ENCODE measurements at regions of chr14 and their contacts with region 1.

Region 1: DNA sequence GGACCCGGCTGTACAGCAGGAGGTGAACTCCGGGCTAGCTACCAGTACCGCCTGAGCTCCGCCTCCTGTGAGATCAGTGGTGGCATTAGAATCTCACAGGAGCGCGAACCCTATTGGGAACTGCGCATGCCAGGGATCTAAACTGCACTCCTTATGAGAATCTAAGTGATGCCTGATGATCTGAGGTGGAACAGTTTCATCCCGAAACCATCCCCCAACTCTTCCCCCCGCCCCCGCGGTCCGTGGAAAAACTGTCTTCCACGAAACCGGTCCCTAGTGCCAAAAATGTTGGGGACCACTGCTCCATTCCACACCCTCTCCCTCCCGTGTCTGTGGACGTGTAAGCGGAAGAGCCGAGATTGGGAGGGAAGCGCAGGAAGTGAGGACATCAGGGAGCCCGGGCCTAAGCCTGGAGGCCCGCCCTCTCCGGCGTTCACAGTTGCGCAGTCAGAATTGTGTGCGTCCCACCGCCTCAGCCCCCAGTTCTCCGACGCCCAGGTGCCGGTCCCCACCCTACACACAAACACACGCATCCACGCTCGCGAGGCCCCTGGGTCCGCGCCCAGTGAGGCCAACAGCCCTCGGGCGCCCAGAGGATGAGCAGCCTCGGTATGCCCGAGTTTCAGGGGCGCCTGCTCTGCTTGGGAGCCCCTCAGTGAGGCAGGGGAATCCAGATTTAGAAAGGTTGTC is 1.8 kb upstream of the RNASE4 start:
- DNase-seq: peak; percentile 88
- H3K4me3 ChIP-seq: peak overlapping the region; percentile 61 to 87 (median 69)
- H3K27ac ChIP-seq: peak overlapping the region; percentile 99 to 100 (median 100)
- H3K4me1 ChIP-seq: peaks cover 17 to 51% (median 35%) of the 10 kb centered on the region in 4 donors
- H3K27me3 ChIP-seq: no peaks in the 10 kb centered on the region
- CTCF ChIP-seq: no peak
- EP300 ChIP-seq: no peak
- POLR2A ChIP-seq: peak; percentile 95

Region 2: DNA sequence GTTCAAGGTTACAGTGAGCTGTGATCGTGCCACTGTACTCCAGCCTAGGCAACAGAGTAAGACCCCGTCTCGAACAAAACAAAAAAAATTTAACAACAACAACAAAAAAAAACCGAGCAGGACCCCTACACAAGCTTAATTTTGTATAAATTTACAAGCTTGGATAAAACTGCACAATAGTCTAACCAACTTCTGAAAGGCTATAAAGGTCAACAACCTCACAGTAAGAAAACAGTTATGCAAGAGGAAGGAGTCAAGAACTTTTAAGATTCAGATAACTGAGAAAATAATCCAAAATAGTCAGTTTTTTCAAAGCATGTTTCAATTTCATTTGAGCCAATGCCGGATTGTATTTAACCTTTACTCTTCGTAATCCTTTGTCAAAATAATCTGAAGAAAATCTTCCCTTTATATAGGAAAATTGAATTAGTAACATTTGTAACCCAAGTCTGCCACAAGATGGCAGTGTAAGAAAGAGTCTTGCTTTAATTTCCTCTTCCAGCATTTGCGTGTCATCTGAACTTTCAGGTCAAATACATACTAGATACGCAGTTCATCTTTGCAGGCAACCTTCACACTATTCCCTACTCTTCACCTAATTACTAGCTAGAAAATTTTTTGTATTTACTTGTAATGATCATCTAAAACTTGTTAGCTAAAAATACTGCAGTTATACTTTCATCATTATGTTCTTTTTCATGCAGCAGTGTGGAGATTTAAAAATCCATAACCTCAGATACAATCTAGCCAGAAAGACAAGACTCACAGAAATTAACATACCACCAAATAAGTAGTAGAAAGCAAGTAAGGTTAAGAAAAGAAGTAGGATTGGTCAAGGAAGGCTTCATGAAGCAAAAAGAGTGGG is 355.3 kb before region 1 on chr14:
- in situ Hi-C with region 1: loop called in 3 of 4 experiments (anchors 10 to 25 kb)
- intact Hi-C with region 1: no loop called
- DNase-seq: no peak
- H3K4me3 ChIP-seq: no peak overlapping the region
- H3K27ac ChIP-seq: peak overlapping the region in 3 of 4 donors; percentile 24 to 60 (median 58)
- H3K4me1 ChIP-seq: peaks cover 3 to 26% (median 4%) of the 10 kb centered on the region in 4 donors
- H3K27me3 ChIP-seq: no peaks in the 10 kb centered on the region
- CTCF ChIP-seq: peak; percentile 71 to 80 (median 77)
- EP300 ChIP-seq: no peak
- POLR2A ChIP-seq: no peak

Region 3: GRCh38 chr14:20343092-20343861 is 339.3 kb before region 1 on chr14 and contains the start of gene PARP2:
- in situ Hi-C with region 1: loop called in 2 of 4 experiments (anchors 10 to 25 kb)
- intact Hi-C with region 1: loop called (anchors 5 kb)
- DNase-seq: peak; percentile 96
- H3K4me3 ChIP-seq: peak within 1 kb of the TSS; percentile 57 to 65 (median 60)
- H3K27ac ChIP-seq: peak within 1 kb of the TSS; percentile 94 to 98 (median 96)
- H3K4me1 ChIP-seq: peaks cover 0 to 7% (median 2%) of the 10 kb centered on the region in 4 donors
- H3K27me3 ChIP-seq: no peaks in the 10 kb centered on the region
- CTCF ChIP-seq: peak in 1 of 5 experiments; percentile 17
- EP300 ChIP-seq: no peak
- POLR2A ChIP-seq: peak; percentile 93
- total RNA-seq, gene PARP2: 4.4 to 96.5 (median 9.1) TPM

Region 4: GRCh38 chr14:20413045-20413799 is 269.4 kb before region 1 on chr14 and contains the start of gene TEP1:
- in situ Hi-C with region 1: no loop called
- intact Hi-C with region 1: no loop called
- DNase-seq: peak; percentile 94
- H3K4me3 ChIP-seq: peak within 1 kb of the TSS; percentile 65 to 93 (median 78)
- H3K27ac ChIP-seq: peak within 1 kb of the TSS; percentile 96 to 99 (median 98)
- H3K4me1 ChIP-seq: peaks cover 4 to 53% (median 39%) of the 10 kb centered on the region in 4 donors
- H3K27me3 ChIP-seq: no peaks in the 10 kb centered on the region
- CTCF ChIP-seq: peak in 1 of 5 experiments; percentile 30
- EP300 ChIP-seq: no peak
- POLR2A ChIP-seq: peak; percentile 97
- total RNA-seq, gene TEP1: 72.2 to 216 (median 79.9) TPM

Region 5: DNA sequence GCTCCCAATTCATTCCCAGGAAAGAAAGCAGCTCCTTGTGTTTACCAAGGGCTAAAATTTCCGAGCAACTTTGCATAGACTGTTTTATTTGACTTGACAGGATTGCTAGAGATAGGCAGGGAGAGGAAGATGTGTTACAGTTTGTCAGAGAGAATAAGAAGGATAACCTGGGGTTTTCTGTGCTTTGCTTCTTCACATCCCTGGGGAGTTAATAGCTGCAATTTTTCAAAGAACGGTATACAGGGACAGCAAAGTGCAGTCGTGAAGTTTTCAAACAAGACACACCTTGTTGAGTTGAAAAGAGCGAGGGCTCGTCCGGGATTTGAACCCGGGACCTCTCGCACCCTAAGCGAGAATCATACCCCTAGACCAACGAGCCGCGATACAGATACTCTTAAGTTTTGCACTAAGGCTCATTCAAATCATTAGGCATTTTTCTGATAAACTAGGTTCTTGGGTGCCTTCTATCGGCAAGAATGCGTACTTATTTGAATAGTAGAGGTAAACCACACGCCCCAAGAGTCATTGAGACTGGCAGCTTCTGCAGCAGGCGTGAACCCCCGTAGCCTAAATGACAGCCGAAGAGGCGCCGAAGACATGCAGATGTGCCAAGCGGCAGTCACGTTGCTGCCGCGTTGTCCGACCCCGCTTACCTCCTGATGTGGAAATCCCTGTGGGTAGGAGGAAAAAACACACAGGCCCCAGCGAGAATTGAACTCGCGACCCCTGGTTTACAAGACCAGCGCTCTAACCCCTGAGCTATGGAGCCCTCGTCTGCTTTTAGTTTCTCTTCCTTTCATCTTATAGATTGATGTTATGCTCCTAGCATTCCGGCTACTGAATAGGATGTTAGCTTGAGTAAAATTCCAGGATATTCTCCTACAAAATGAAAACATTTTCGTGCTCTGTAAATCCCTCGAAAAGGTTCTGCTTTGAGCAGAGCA is 69.2 kb before region 1 on chr14:
- in situ Hi-C with region 1: loop called in 2 of 4 experiments (anchors 5 to 10 kb)
- intact Hi-C with region 1: loop called (anchors 2 kb)
- DNase-seq: peak; percentile 86
- H3K4me3 ChIP-seq: peak overlapping the region; percentile 39 to 57 (median 40)
- H3K27ac ChIP-seq: peak overlapping the region; percentile 73 to 91 (median 78)
- H3K4me1 ChIP-seq: peaks cover 0 to 29% (median 12%) of the 10 kb centered on the region in 4 donors
- H3K27me3 ChIP-seq: no peaks in the 10 kb centered on the region
- CTCF ChIP-seq: peak; percentile 69 to 99 (median 72)
- EP300 ChIP-seq: no peak
- POLR2A ChIP-seq: peak; percentile 22

Region 6: GRCh38 chr14:20820063-20820904 is 137.7 kb after region 1 on chr14:
- in situ Hi-C with region 1: no loop called
- intact Hi-C with region 1: no loop called
- DNase-seq: peak; percentile 18
- H3K4me3 ChIP-seq: no peak overlapping the region
- H3K27ac ChIP-seq: peak overlapping the region in 3 of 4 donors; percentile 45 to 72 (median 53)
- H3K4me1 ChIP-seq: peaks cover 0 to 11% (median 5%) of the 10 kb centered on the region in 4 donors
- H3K27me3 ChIP-seq: no peaks in the 10 kb centered on the region
- CTCF ChIP-seq: no peak
- EP300 ChIP-seq: no peak
- POLR2A ChIP-seq: no peak

Region 7: DNA sequence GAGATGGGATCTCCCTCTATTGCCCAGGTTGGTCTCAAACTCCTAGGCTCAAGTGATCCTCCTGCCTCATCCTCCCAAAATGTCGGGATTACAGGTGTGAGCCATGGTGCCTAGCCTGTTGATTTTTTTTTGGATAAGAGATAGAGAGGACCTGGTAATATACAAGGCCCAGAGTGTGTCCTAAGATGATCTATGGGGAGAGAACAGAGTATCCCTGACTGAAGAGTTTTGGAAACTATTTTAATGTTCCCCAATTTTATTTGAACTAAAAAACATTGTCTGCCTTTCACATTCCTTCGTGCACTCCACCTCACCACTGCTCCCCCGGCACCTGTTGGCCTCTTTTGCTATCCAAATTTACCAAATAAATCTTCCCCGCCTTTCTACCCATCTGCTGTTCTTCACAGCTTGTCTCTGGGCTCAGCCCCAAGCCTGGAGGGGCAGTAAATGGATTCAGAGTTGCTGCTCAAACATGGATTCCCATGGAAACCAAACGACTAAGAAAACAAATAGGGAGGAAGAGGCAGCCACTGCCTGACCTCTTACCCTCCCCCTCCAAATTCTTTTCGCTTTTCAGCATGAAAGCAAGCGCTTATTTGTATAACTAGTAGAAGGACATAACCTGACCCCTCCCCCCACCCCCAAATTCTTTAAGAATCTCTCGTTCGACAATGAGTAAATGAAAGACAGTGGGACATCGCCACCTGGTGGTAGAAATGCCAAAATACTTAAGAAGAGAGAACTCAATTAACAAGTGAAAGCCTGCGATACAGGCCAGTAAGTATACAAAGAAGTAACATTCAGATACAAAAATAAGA is 874.7 kb after region 1 on chr14:
- in situ Hi-C with region 1: no loop called
- intact Hi-C with region 1: loop called (anchors 5 kb)
- DNase-seq: peak; percentile 77
- H3K4me3 ChIP-seq: peak overlapping the region in 2 of 4 donors; percentile 19 to 39
- H3K27ac ChIP-seq: peak overlapping the region; percentile 54 to 79 (median 61)
- H3K4me1 ChIP-seq: peaks cover 0 to 9% (median 5%) of the 10 kb centered on the region in 4 donors
- H3K27me3 ChIP-seq: no peaks in the 10 kb centered on the region
- CTCF ChIP-seq: peak; percentile 70 to 83 (median 74)
- EP300 ChIP-seq: no peak
- POLR2A ChIP-seq: no peak

Measured in transverse colon (tissue), 4 donors.